AG04450 (cell line): ENCODE measurements at regions of chr14 and their contacts with region 1.

Region 1: GRCh38 chr14:59507063-59507780 is 22.9 kb downstream of the JKAMP start:
- DNase-seq: peak; percentile 26
- H3K4me3 ChIP-seq: no peak overlapping the region
- H3K27ac ChIP-seq: no peak overlapping the region
- H3K27me3 ChIP-seq: no peaks in the 10 kb centered on the region
- CTCF ChIP-seq: peak; percentile 99

Region 2: GRCh38 chr14:59490756-59491155 is 16.5 kb before region 1 on chr14:
- CTCF ChIA-PET with region 1: interaction called, 23 read pairs
- POLR2A ChIA-PET with region 1: no interaction called
- DNase-seq: no peak
- H3K4me3 ChIP-seq: no peak overlapping the region
- H3K27ac ChIP-seq: no peak overlapping the region
- H3K27me3 ChIP-seq: no peaks in the 10 kb centered on the region
- CTCF ChIP-seq: no peak

Region 3: GRCh38 chr14:59543873-59544272 is 36.7 kb after region 1 on chr14:
- CTCF ChIA-PET with region 1: interaction called, 12 read pairs
- POLR2A ChIA-PET with region 1: no interaction called
- DNase-seq: no peak
- H3K4me3 ChIP-seq: no peak overlapping the region
- H3K27ac ChIP-seq: no peak overlapping the region
- H3K27me3 ChIP-seq: peaks cover 2% of the 10 kb centered on the region
- CTCF ChIP-seq: no peak

Region 4: GRCh38 chr14:59576332-59577294 is 69.4 kb after region 1 on chr14 and contains the start of gene CCDC175:
- CTCF ChIA-PET with region 1: interaction called, 169 read pairs
- POLR2A ChIA-PET with region 1: no interaction called
- DNase-seq: peak; percentile 41
- H3K4me3 ChIP-seq: peak within 1 kb of the TSS; percentile 53
- H3K27ac ChIP-seq: no peak within 1 kb of the TSS
- H3K27me3 ChIP-seq: peaks cover 7% of the 10 kb centered on the region
- CTCF ChIP-seq: peak; percentile 82
- polyA plus RNA-seq, gene CCDC175: not detected in 2 replicates

Region 5: GRCh38 chr14:60184146-60184904 is 677.1 kb after region 1 on chr14:
- CTCF ChIA-PET with region 1: interaction called, 12 read pairs
- POLR2A ChIA-PET with region 1: no interaction called
- DNase-seq: peak; percentile 46
- H3K4me3 ChIP-seq: peak overlapping the region; percentile 47
- H3K27ac ChIP-seq: no peak overlapping the region
- H3K27me3 ChIP-seq: no peaks in the 10 kb centered on the region
- CTCF ChIP-seq: peak; percentile 68